MCF 10A (cell line): ENCODE measurements at regions of chr6 and their contacts with region 1.

Region 1: DNA sequence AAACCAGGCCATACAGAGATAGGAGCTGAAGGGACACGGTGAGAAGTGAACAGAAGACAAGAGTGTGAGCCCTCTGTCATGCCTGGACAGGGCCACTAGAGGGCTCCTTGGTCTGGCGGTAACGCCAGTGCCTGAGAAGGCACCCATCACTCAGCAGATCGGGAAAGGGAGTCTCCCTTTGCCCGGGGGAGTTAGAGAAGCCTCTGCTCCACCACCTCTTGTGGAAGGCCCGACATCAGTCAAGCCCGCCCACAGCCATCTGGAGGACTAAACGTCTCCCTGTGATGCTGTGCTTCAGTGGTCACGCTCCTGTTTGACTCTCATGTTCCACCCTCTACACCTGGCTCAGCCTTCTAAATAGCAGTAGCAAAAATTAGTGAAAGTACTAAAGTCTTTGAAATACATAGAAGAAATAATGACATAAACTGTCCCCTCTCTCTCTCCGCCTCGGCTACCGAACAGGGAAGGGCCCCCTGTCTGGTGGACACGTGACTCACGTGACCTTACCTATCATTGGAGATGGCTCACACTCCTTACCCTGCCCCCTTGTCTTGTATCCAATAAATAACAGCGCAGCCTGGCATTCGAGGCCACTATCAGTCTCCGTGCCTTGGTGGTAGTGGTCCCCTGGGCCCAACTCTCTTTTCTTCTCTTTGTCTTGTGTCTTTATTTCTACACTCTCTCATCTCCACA is 66.7 kb downstream of the RPP21 start:
- DNase-seq: peak; percentile 60
- H3K4me3 Mint-ChIP-seq: no peak overlapping the region
- H3K27ac Mint-ChIP-seq: no peak overlapping the region
- H3K4me1 Mint-ChIP-seq: no peaks in the 10 kb centered on the region
- H3K27me3 Mint-ChIP-seq: peaks cover 88% of the 10 kb centered on the region
- CTCF ChIP-seq: peak; percentile 79

Region 2: GRCh38 chr6:30453508-30454116 is 42.0 kb after region 1 on chr6:
- CTCF ChIA-PET with region 1: interaction called, 4 read pairs
- POLR2A ChIA-PET with region 1: no interaction called
- intact Hi-C with region 1: loop called (anchors 1 kb)
- DNase-seq: peak; percentile 78
- H3K4me3 Mint-ChIP-seq: no peak overlapping the region
- H3K27ac Mint-ChIP-seq: no peak overlapping the region
- H3K4me1 Mint-ChIP-seq: no peaks in the 10 kb centered on the region
- H3K27me3 Mint-ChIP-seq: peaks cover 75% of the 10 kb centered on the region
- CTCF ChIP-seq: peak; percentile 57

Region 3: DNA sequence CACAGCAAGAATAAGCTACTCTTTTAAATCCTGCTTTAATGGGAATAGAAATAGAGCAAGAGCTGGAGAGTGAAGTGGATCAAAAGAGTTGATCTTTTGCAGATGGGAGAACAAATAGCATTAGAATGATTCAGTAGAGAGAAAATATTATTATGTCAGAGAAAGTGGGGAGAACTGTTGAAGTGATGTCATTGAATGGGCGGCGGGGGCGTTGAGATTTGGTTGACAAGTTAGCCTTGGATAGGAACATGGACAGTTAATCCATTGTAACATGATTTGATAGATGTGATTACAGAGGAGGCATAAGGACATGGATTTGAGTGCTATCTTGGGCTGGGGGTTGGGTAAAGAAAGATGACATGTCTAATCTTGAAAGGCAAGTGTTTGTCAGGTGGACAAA is 224.2 kb after region 1 on chr6:
- CTCF ChIA-PET with region 1: no interaction called
- POLR2A ChIA-PET with region 1: no interaction called
- intact Hi-C with region 1: no loop called
- DNase-seq: no peak
- H3K4me3 Mint-ChIP-seq: no peak overlapping the region
- H3K27ac Mint-ChIP-seq: no peak overlapping the region
- H3K4me1 Mint-ChIP-seq: no peaks in the 10 kb centered on the region
- H3K27me3 Mint-ChIP-seq: no peaks in the 10 kb centered on the region
- CTCF ChIP-seq: no peak